Caco-2 (cell line): ENCODE measurements at regions of chr15 and their contacts with region 1.

Region 1: GRCh38 chr15:57505949-57506391 is 85.7 kb upstream of the MYZAP start:
- DNase-seq: peak; percentile 90 to 93
- H3K4me3 ChIP-seq: no peak overlapping the region
- H3K4me3 Mint-ChIP-seq: peak overlapping the region; percentile 64
- H3K27ac Mint-ChIP-seq: peak overlapping the region; percentile 90
- H3K4me1 ChIP-seq: peaks cover 66% of the 10 kb centered on the region
- H3K4me1 Mint-ChIP-seq: peaks cover 60% of the 10 kb centered on the region
- H3K27me3 ChIP-seq: no peaks in the 10 kb centered on the region
- H3K27me3 Mint-ChIP-seq: no peaks in the 10 kb centered on the region
- CTCF ChIP-seq: no peak

Region 2: GRCh38 chr15:57375827-57376695 is 129.9 kb before region 1 on chr15 and contains the start of gene CGNL1:
- CTCF ChIA-PET with region 1: interaction called, 12 read pairs
- POLR2A ChIA-PET with region 1: no interaction called
- intact Hi-C with region 1: loop called (anchors 2 kb)
- DNase-seq: peak in 1 of 2 experiments; percentile 75
- H3K4me3 ChIP-seq: peak within 1 kb of the TSS; percentile 79
- H3K4me3 Mint-ChIP-seq: peak within 1 kb of the TSS; percentile 89
- H3K27ac Mint-ChIP-seq: peak within 1 kb of the TSS; percentile 53
- H3K4me1 ChIP-seq: peaks cover 15% of the 10 kb centered on the region
- H3K4me1 Mint-ChIP-seq: peaks cover 18% of the 10 kb centered on the region
- H3K27me3 ChIP-seq: no peaks in the 10 kb centered on the region
- H3K27me3 Mint-ChIP-seq: no peaks in the 10 kb centered on the region
- CTCF ChIP-seq: no peak
- total RNA-seq, gene CGNL1: 8.3 and 9.4 TPM in 2 replicates

Region 3: GRCh38 chr15:57476533-57476975 is 29.4 kb before region 1 on chr15:
- CTCF ChIA-PET with region 1: interaction called, 5 read pairs
- POLR2A ChIA-PET with region 1: no interaction called
- intact Hi-C with region 1: loop called (anchors 1 kb)
- DNase-seq: no peak
- H3K4me3 ChIP-seq: no peak overlapping the region
- H3K4me3 Mint-ChIP-seq: no peak overlapping the region
- H3K27ac Mint-ChIP-seq: no peak overlapping the region
- H3K4me1 ChIP-seq: peaks cover 28% of the 10 kb centered on the region
- H3K4me1 Mint-ChIP-seq: peaks cover 29% of the 10 kb centered on the region
- H3K27me3 ChIP-seq: no peaks in the 10 kb centered on the region
- H3K27me3 Mint-ChIP-seq: no peaks in the 10 kb centered on the region
- CTCF ChIP-seq: no peak

Region 4: GRCh38 chr15:57516327-57517031 is 10.5 kb after region 1 on chr15:
- CTCF ChIA-PET with region 1: no interaction called
- POLR2A ChIA-PET with region 1: no interaction called
- intact Hi-C with region 1: no loop called
- DNase-seq: no peak
- H3K4me3 ChIP-seq: no peak overlapping the region
- H3K4me3 Mint-ChIP-seq: no peak overlapping the region
- H3K27ac Mint-ChIP-seq: no peak overlapping the region
- H3K4me1 ChIP-seq: no peaks in the 10 kb centered on the region
- H3K4me1 Mint-ChIP-seq: no peaks in the 10 kb centered on the region
- H3K27me3 ChIP-seq: no peaks in the 10 kb centered on the region
- H3K27me3 Mint-ChIP-seq: no peaks in the 10 kb centered on the region
- CTCF ChIP-seq: no peak